MCF 10A (cell line): ENCODE measurements at regions of chr16 and their contacts with region 1.

Region 1: DNA sequence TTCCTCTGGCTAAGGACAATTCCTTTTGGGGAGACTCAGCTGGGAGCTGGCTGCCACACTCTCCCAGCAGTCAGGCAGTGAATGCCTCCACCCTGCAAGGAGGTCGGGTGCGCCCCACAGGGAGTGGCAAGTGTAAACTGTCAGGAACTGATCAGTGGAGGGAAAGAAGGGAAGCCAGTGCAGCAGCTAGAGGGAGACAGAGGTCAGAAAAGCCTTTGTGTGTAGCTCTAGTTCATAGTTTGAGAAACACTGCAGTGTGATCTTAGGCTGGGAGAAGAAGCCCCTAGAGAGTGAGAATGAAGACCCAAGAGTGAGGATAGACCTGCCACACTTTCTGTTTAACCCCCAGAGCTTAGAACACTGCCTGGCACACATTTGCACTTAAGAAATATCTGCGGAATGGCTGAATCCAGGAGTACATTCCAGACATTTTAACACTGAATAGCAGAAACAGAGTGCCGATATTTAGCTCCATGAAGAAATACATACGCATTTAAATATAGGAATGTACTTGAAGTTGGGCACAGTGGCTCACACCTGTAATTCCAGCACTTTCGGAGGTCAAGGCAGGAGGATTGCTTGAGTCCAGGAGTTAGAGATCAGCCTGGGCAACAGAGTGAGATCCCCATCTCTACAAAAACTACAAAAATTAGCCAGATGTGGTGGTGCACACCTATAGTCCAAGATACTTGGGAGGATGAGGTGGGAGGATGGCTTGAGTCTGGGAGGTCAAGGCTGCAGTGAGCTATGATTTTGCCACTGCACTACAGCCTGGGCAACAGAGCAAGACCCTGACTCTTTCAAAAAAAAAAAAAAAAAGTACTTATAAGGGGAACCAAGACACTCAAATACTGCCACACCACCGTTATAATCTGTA is 11.1 kb upstream of the SLC5A11 start:
- DNase-seq: peak; percentile 66
- H3K4me3 Mint-ChIP-seq: no peak overlapping the region
- H3K27ac Mint-ChIP-seq: no peak overlapping the region
- H3K4me1 Mint-ChIP-seq: peaks cover 10% of the 10 kb centered on the region
- H3K27me3 Mint-ChIP-seq: no peaks in the 10 kb centered on the region
- CTCF ChIP-seq: peak; percentile 52

Region 2: DNA sequence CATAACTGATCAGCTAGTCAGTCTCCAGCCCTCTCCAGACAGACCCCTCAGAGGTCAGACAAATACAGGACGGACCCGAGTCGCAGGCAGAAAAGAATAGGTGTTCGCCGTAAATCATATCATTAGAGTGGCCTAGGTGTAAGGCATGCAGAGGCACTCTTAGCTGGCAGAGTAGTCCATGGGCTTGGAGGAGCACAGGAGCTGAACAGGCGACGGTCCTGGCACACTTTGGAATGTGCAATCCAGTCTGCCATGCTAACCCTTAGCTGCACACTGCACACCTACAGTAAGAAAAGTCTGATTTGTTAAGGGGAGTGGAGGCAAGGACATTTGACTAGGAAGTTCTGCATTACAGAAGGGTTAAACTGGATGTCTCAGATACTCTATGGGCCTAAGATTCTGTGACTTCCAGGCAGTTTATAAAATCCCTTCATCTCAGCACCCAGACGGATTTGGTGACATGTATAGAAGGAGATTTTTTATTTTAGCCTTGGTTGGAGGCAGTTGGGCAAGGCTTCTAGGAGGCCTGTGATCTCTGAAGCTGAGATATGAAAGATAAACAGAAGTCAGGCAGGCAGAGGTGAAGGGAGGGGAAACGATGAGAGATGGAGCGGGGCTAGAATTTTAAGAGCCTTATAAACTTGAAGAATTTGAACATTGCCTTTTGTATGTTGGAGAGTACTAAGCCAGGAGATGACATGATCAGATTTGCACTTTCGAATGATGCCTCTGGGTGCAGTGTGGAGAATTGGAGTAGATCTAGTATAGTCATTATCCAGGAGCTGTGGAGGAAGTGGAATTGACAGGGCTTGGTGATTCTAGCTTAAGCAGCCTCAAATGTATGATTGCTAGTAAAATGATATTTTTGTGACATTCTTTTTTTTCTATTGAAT is 23.5 kb before region 1 on chr16:
- CTCF ChIA-PET with region 1: interaction called, 10 read pairs
- POLR2A ChIA-PET with region 1: interaction called, 3 read pairs
- intact Hi-C with region 1: no loop called
- DNase-seq: no peak
- H3K4me3 Mint-ChIP-seq: no peak overlapping the region
- H3K27ac Mint-ChIP-seq: no peak overlapping the region
- H3K4me1 Mint-ChIP-seq: no peaks in the 10 kb centered on the region
- H3K27me3 Mint-ChIP-seq: no peaks in the 10 kb centered on the region
- CTCF ChIP-seq: no peak

Region 3: GRCh38 chr16:24906199-24907020 is 71.7 kb after region 1 on chr16:
- CTCF ChIA-PET with region 1: interaction called, 10 read pairs
- POLR2A ChIA-PET with region 1: no interaction called
- intact Hi-C with region 1: no loop called
- DNase-seq: peak; percentile 26
- H3K4me3 Mint-ChIP-seq: no peak overlapping the region
- H3K27ac Mint-ChIP-seq: no peak overlapping the region
- H3K4me1 Mint-ChIP-seq: no peaks in the 10 kb centered on the region
- H3K27me3 Mint-ChIP-seq: peaks cover 22% of the 10 kb centered on the region
- CTCF ChIP-seq: peak; percentile 49

Region 4: DNA sequence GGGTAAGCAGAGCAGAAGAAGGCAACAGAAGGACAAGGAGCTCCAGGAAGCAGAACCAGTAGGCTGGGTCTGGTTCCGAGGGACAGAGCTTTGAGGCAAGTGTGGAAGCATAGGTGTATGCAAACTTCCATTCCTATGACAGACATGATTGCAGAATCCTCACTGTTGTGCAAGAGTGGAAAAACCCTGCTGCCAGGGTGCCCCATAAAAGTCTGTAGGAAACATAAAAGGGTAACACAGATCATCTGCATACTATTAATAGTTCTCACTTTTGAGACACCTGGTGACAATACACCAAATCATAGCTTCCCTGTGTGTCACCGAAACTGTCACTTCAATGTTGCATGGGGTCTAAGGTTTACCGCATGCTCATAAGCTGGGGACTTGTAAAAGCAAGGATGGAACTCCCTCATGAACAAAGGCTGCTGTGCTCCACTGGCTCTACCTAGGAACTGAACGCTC is 140.8 kb after region 1 on chr16:
- CTCF ChIA-PET with region 1: interaction called, 10 read pairs
- POLR2A ChIA-PET with region 1: no interaction called
- intact Hi-C with region 1: no loop called
- DNase-seq: peak; percentile 77
- H3K4me3 Mint-ChIP-seq: no peak overlapping the region
- H3K27ac Mint-ChIP-seq: peak overlapping the region; percentile 59
- H3K4me1 Mint-ChIP-seq: peaks cover 29% of the 10 kb centered on the region
- H3K27me3 Mint-ChIP-seq: no peaks in the 10 kb centered on the region
- CTCF ChIP-seq: no peak

Region 5: GRCh38 chr16:25126820-25127232 is 292.1 kb after region 1 on chr16:
- CTCF ChIA-PET with region 1: interaction called, 3 read pairs
- POLR2A ChIA-PET with region 1: no interaction called
- intact Hi-C with region 1: loop called (anchors 5 kb)
- DNase-seq: peak; percentile 86
- H3K4me3 Mint-ChIP-seq: no peak overlapping the region
- H3K27ac Mint-ChIP-seq: no peak overlapping the region
- H3K4me1 Mint-ChIP-seq: peaks cover 15% of the 10 kb centered on the region
- H3K27me3 Mint-ChIP-seq: no peaks in the 10 kb centered on the region
- CTCF ChIP-seq: peak; percentile 58